Aorta (tissue), 5 donors: ENCODE measurements at regions of chr9 and their contacts with region 1.

Region 1: DNA sequence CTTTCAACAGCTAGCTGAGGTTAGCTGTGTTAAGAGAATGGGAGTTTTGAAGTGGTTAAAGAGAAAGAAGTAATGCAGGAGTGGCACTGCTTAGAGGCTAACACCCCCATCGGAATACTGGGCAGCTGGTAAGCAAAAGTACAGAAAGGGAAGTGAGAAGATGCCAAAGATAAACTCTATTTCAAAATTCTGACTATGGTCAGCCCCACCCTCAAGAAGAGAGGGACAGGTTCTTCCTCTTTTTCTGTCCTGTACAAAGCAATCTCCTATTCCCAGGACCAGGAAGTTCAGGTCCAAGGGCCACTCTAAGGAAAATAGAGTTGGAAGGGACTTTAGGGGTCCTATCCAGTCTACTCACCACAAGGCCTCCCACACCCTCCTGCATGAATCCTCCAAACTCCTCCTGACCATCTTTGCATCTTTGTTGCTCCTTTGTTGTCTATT is 45.9 kb upstream of the JAK2 start:
- DNase-seq: no peak
- ATAC-seq: peak; percentile 24
- H3K4me3 ChIP-seq: no peak overlapping the region
- H3K27ac ChIP-seq: peak overlapping the region; percentile 76 to 88
- H3K4me1 ChIP-seq: peaks cover 7 to 21% of the 10 kb centered on the region in 2 donors
- H3K27me3 ChIP-seq: no peaks in the 10 kb centered on the region

Region 2: DNA sequence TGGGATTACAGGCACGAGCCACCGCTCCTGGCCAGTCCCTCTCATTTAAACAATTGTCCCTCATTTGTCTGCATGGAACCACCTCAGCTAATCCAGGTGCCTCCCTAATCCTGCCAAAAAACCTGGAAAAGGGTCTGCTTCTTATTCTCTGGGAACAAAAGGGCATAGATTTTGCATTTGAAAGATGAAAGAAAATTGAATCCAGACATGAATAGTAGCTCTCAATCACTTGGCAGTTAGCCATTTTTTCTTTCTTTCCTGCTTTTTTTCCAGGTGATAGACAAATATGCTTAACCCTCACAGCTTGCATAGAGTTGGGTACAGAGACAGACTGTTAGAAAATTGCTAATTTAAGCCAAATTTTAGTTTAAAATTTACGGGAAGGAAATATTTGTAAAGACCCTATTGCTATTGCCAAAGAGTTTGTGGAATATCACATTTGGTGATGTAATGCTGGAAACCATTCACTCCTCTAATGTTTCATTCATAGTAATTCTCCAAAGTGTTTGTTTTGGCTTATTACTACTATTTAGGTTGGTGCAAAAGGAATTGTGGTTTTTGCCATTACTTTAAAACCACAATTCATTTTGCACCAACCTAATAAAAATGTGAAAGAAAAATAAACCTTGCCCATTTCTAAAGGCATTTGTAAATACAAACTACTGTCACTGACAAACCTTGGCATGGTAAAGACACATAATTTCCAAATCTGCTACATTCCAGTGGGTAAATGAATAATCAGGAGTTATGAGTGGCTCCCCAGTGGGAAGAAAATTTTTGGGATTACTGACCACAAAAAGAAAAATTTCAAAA is 34.6 kb before region 1 on chr9:
- intact Hi-C with region 1: loop called in 1 of 2 experiments (anchors 5 kb)
- DNase-seq: no peak
- ATAC-seq: peak; percentile 62
- H3K4me3 ChIP-seq: no peak overlapping the region
- H3K27ac ChIP-seq: no peak overlapping the region
- H3K4me1 ChIP-seq: peaks cover 4% of the 10 kb centered on the region in 2 donors
- H3K27me3 ChIP-seq: no peaks in the 10 kb centered on the region